MCF 10A (cell line): ENCODE measurements at regions of chr18 and their contacts with region 1.

Region 1: GRCh38 chr18:26757263-26758019 is 108.1 kb downstream of the AQP4 start:
- DNase-seq: peak; percentile 45
- H3K4me3 Mint-ChIP-seq: no peak overlapping the region
- H3K27ac Mint-ChIP-seq: peak overlapping the region; percentile 60
- H3K4me1 Mint-ChIP-seq: peaks cover 22% of the 10 kb centered on the region
- H3K27me3 Mint-ChIP-seq: no peaks in the 10 kb centered on the region
- CTCF ChIP-seq: no peak

Region 2: DNA sequence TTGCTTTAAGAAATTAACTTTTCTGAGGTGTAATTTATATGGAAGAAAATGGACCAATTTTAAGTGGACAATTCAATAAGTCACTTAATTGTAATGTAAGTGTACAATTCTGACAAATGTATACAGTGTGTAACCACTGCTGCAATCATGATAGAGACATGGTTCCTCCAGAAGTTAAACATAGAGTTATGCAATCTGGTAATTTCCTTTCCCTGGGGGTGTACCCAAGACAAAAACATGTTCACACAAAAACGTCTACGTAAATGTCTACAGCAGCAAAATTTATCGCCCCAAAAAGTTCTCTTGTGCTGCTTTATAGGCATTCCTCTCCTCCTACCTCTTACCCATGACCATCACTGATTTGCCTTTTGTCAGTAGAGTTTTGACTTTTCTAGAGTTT is 33.5 kb before region 1 on chr18:
- CTCF ChIA-PET with region 1: no interaction called
- POLR2A ChIA-PET with region 1: interaction called, 4 read pairs
- intact Hi-C with region 1: loop called (anchors 1 kb)
- DNase-seq: peak; percentile 67
- H3K4me3 Mint-ChIP-seq: no peak overlapping the region
- H3K27ac Mint-ChIP-seq: peak overlapping the region; percentile 44
- H3K4me1 Mint-ChIP-seq: peaks cover 31% of the 10 kb centered on the region
- H3K27me3 Mint-ChIP-seq: no peaks in the 10 kb centered on the region
- CTCF ChIP-seq: no peak

Region 3: GRCh38 chr18:26746279-26747150 is 10.9 kb before region 1 on chr18:
- CTCF ChIA-PET with region 1: interaction called, 5 read pairs
- POLR2A ChIA-PET with region 1: interaction called, 44 read pairs
- intact Hi-C with region 1: no loop called
- DNase-seq: peak; percentile 69
- H3K4me3 Mint-ChIP-seq: peak overlapping the region; percentile 40
- H3K27ac Mint-ChIP-seq: peak overlapping the region; percentile 71
- H3K4me1 Mint-ChIP-seq: peaks cover 32% of the 10 kb centered on the region
- H3K27me3 Mint-ChIP-seq: no peaks in the 10 kb centered on the region
- CTCF ChIP-seq: no peak